AG04450 (cell line): ENCODE measurements at regions of chr11 and their contacts with region 1.

Region 1: DNA sequence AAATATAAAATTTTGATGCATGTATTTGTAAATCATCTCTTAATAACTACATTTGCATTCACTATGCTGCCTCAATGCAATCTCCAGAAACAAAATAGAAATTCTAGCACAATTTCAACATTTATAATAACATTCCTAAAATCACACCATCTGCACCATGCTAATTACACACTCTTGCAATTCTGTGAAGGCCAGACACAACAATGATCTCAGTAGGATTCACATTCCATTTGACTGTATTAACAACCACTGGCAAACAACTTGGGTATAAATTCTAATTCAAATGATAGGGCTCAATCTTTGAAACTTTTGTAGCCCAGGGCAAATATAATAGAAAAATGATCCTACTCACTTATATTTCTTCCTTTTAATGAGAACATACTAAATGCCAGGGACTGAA is 25.9 kb downstream of the RAB6A start:
- DNase-seq: no peak
- H3K4me3 ChIP-seq: no peak overlapping the region
- H3K27ac ChIP-seq: no peak overlapping the region
- H3K27me3 ChIP-seq: no peaks in the 10 kb centered on the region
- CTCF ChIP-seq: no peak

Region 2: DNA sequence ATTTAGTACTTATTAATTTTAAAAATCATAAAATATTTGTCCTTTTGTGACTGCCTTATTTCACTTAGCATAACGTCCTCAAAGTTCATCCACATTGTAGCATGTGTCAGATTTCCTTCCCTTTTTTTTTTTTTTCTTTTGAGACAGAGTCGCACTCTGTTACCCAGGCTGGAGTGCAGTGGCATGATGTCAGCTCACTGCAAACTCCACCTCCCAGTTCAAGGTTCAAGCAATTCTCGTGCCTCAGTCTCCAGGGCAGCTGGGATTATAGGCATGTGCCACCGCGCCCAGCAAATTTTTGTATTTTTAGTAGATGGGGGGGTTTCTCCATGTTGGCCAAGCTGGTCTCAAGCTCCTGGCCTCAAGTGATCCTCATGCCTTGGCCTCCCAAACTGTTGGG is 15.2 kb after region 1 on chr11:
- CTCF ChIA-PET with region 1: no interaction called
- POLR2A ChIA-PET with region 1: interaction called, 14 read pairs
- DNase-seq: no peak
- H3K4me3 ChIP-seq: no peak overlapping the region
- H3K27ac ChIP-seq: no peak overlapping the region
- H3K27me3 ChIP-seq: no peaks in the 10 kb centered on the region
- CTCF ChIP-seq: no peak